IMR-90 (cell line): ENCODE measurements at regions of chr6 and their contacts with region 1.

Region 1: GRCh38 chr6:15245361-15246216 is at the start of gene JARID2:
- DNase-seq: peak; percentile 98
- ATAC-seq: peak; percentile 70
- H3K4me3 ChIP-seq: peak within 1 kb of the TSS; percentile 69
- H3K27ac ChIP-seq: peak within 1 kb of the TSS; percentile 89
- H3K4me1 ChIP-seq: peaks cover 5% of the 10 kb centered on the region
- H3K27me3 ChIP-seq: no peaks in the 10 kb centered on the region
- CTCF ChIP-seq: no peak; the same call in 1 of the 2 replicates
- POLR2A ChIP-seq: peak; percentile 96
- RAD21 ChIP-seq: peak; percentile 34; the same call in 1 of the 2 replicates
- total RNA-seq, gene JARID2: 12.9 and 13.1 TPM in 2 replicates

Region 2: DNA sequence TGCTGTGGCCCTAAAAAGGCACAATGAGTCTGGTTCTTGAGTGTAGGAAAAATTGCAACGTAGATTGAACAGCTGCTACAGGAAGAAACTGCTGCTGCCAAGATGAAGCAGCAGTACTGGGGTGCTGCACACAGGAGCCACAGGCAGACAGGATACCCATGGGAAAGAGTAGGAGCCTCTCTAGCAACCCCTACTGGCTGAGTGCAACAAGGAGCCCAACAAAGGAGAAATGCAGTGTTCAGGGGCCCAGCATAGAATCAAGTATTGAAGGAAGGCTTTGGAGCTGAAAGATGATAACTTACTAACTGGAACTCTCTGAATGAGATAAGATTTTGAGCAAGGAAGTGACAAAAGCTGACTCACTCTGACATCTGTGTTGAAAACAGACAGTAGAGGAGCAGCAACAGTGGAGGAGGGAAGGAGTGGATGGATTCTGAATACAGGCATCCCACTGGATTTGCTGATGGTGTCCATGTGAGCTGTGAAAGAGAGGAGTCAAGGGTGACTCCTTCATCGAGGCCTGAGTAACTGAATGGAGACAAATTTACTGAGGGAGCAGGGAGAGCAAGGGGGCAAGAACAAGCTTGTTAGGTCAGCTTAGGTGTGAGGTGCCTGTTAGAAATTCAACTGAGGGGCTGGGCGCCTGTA is 534.4 kb before region 1 on chr6:
- CTCF ChIA-PET with region 1: no interaction called
- POLR2A ChIA-PET with region 1: no interaction called
- dilution Hi-C with region 1: no loop called
- in situ Hi-C with region 1: no loop called
- intact Hi-C with region 1: loop called (anchors 2 kb)
- DNase-seq: peak; percentile 98
- ATAC-seq: peak; percentile 70
- H3K4me3 ChIP-seq: no peak overlapping the region
- H3K27ac ChIP-seq: peak overlapping the region; percentile 69
- H3K4me1 ChIP-seq: peaks cover 18% of the 10 kb centered on the region
- H3K27me3 ChIP-seq: no peaks in the 10 kb centered on the region
- CTCF ChIP-seq: peak; percentile 81
- POLR2A ChIP-seq: peak; percentile 61
- RAD21 ChIP-seq: peak; percentile 78

Region 3: GRCh38 chr6:14799928-14800327 is 445.7 kb before region 1 on chr6:
- CTCF ChIA-PET with region 1: no interaction called
- POLR2A ChIA-PET with region 1: no interaction called
- dilution Hi-C with region 1: no loop called
- in situ Hi-C with region 1: no loop called
- intact Hi-C with region 1: loop called (anchors 10 kb)
- DNase-seq: peak; percentile 81
- ATAC-seq: peak; percentile 80
- H3K4me3 ChIP-seq: no peak overlapping the region
- H3K27ac ChIP-seq: no peak overlapping the region
- H3K4me1 ChIP-seq: peaks cover 10% of the 10 kb centered on the region
- H3K27me3 ChIP-seq: no peaks in the 10 kb centered on the region
- CTCF ChIP-seq: no peak
- POLR2A ChIP-seq: no peak
- RAD21 ChIP-seq: no peak

Region 4: DNA sequence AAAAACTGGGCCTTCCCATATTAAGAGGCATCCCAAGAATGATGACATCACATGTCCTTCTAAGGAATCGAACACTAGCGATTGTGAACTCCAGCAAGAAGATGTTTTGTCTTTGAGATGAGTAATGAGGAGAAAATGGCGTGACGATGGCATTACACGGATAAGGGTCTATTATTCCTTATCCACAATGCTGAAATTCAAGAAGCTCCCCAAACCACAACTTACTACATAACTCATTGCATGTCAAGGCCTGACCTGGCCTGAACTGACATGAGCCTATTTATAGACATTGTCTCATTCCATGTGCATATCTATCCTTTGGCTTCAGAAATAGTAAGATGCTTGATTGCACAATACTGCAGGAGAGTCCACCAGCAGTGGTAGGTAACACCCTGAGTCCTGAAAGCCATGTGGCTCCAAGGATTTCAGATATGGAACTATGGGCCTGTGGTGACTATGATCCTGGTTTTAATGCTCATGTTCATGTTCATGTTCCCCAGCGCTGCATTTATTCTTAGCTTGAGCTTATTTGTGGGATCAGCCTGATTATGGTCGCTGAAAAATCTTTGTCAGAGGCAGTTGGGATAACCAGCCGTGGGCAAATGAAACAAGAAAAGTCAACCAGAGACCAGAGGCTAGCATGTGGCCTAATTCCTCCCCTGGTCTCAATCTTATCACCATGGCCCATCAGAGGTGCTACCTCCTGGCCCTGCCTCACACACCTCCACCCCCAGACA is 182.9 kb before region 1 on chr6:
- CTCF ChIA-PET with region 1: no interaction called
- POLR2A ChIA-PET with region 1: no interaction called
- dilution Hi-C with region 1: no loop called
- in situ Hi-C with region 1: no loop called
- intact Hi-C with region 1: loop called (anchors 1 kb)
- DNase-seq: peak; percentile 99
- ATAC-seq: peak; percentile 4; the same call in 1 of the 2 replicates
- H3K4me3 ChIP-seq: no peak overlapping the region
- H3K27ac ChIP-seq: no peak overlapping the region
- H3K4me1 ChIP-seq: peaks cover 21% of the 10 kb centered on the region
- H3K27me3 ChIP-seq: no peaks in the 10 kb centered on the region
- CTCF ChIP-seq: no peak
- POLR2A ChIP-seq: no peak
- RAD21 ChIP-seq: no peak

Region 5: GRCh38 chr6:15441215-15441868 is 195.8 kb after region 1 on chr6:
- CTCF ChIA-PET with region 1: interaction called, 5 read pairs
- POLR2A ChIA-PET with region 1: no interaction called
- dilution Hi-C with region 1: no loop called
- in situ Hi-C with region 1: no loop called
- intact Hi-C with region 1: loop called (anchors 1 kb)
- DNase-seq: peak; percentile 78
- ATAC-seq: peak; percentile 63
- H3K4me3 ChIP-seq: no peak overlapping the region
- H3K27ac ChIP-seq: no peak overlapping the region
- H3K4me1 ChIP-seq: peaks cover 19% of the 10 kb centered on the region
- H3K27me3 ChIP-seq: no peaks in the 10 kb centered on the region
- CTCF ChIP-seq: peak; percentile 84
- POLR2A ChIP-seq: no peak
- RAD21 ChIP-seq: peak; percentile 83

Region 6: DNA sequence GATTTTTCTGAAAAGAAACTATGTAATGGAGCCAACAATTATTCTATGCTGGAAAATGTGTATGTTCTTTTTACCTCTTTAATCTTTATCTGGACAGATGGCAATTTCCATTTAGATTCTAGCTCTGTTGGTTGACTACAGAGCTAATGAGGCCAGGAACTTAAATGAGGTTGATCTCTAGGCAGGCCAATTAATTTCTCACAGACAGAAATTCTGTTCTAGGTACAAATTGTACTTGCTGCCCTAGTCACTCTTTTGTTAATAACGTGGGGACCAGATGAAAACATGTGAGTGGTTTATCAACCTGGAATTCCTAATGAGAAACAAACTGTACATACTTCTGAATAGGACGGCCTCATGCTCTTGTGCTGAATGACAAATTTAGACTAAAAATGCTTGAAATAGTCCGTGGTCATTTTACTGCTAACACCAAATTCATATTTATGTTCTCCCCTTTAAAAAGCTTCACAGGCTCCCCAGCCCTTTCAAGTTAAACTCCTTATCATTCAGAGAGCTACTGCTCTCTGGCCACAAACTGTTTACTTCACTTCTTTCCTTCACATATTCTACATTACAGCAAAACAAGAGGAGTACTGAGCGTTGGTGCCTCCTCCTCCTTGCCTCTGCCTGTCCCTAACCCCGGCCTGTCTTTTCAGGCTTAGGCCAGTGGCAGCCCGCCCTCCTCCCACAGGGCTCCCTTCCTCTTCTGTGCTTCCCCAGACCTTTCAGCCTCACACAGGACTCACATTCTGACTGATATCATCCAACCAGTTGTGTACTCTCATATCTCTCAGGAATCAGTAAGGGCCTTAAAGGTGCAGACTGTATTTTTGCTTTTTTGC is 375.8 kb after region 1 on chr6:
- CTCF ChIA-PET with region 1: interaction called, 4 read pairs
- POLR2A ChIA-PET with region 1: no interaction called
- dilution Hi-C with region 1: no loop called
- in situ Hi-C with region 1: loop called (anchors 25 kb)
- intact Hi-C with region 1: loop called (anchors 1 kb)
- DNase-seq: peak; percentile 30
- ATAC-seq: peak; percentile 72
- H3K4me3 ChIP-seq: no peak overlapping the region
- H3K27ac ChIP-seq: no peak overlapping the region
- H3K4me1 ChIP-seq: peaks cover 7% of the 10 kb centered on the region
- H3K27me3 ChIP-seq: no peaks in the 10 kb centered on the region
- CTCF ChIP-seq: no peak
- POLR2A ChIP-seq: no peak
- RAD21 ChIP-seq: no peak